ENCODE measurements at regions of chr4 and their contacts with region 1.

Region 1: DNA sequence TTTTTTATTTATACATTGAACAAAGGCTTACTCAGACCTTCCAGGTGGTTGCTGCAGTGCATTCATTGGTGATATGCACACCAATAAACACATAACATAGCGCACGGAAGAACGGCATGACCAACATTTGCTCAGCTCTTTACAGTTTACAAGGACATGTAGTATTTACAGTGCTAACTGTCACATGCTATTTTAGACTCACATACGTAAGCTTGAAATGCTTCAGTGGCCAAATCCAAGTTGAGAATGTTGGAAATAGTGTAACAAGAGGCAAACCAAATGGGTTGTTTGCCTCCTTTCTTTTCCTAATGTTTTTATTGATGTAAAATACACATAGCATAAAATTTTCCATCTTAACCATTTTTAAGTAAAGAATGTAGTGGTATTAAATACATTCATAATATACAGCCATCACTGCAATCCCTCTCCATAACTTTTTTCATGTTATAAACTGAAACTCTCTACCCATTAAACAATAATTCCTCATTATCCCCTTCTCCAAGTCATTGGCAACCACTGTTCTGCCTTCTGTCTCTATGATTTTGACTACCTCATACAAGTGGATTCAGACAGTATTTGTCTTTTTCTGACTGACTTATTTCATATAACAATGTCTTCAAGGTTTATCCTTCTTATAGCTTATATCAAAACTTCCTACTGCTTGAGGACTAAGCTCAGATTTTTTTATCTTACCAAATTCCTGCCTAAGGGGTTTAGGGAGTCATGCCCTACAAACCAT is 1722.9 kb upstream of the AGA start:
- DNase-seq: no peak
- ATAC-seq: peak; percentile 37
- H3K4me3 Mint-ChIP-seq: peak overlapping the region; percentile 98
- H3K27ac Mint-ChIP-seq: peak overlapping the region; percentile 99
- H3K4me1 Mint-ChIP-seq: peaks cover 31% of the 10 kb centered on the region
- H3K27me3 Mint-ChIP-seq: no peaks in the 10 kb centered on the region
- CTCF ChIP-seq: no peak

Region 2: DNA sequence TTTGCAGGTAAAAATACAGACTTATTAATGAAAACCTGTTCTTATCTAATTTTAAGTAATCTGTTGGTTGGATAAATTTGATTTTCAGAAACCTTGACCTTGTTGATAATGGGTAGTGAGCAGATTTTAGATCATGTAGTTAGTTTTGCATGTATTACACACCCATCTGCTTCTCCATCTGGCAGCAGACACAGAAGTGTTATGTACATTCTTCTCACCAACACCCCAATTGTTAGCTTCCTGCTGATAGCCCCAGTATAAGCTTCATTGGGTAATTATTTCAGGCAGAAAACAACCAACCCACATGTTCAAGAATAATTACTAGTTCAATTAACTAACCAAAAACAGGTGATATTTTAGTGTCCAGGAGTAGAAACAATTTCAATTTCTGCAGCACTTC is 17.6 kb after region 1 on chr4:
- CTCF ChIA-PET with region 1: no interaction called
- POLR2A ChIA-PET with region 1: no interaction called
- DNase-seq: no peak
- ATAC-seq: no peak
- H3K4me3 Mint-ChIP-seq: no peak overlapping the region
- H3K27ac Mint-ChIP-seq: no peak overlapping the region
- H3K4me1 Mint-ChIP-seq: peaks cover 33% of the 10 kb centered on the region
- H3K27me3 Mint-ChIP-seq: no peaks in the 10 kb centered on the region
- CTCF ChIP-seq: no peak

Region 3: DNA sequence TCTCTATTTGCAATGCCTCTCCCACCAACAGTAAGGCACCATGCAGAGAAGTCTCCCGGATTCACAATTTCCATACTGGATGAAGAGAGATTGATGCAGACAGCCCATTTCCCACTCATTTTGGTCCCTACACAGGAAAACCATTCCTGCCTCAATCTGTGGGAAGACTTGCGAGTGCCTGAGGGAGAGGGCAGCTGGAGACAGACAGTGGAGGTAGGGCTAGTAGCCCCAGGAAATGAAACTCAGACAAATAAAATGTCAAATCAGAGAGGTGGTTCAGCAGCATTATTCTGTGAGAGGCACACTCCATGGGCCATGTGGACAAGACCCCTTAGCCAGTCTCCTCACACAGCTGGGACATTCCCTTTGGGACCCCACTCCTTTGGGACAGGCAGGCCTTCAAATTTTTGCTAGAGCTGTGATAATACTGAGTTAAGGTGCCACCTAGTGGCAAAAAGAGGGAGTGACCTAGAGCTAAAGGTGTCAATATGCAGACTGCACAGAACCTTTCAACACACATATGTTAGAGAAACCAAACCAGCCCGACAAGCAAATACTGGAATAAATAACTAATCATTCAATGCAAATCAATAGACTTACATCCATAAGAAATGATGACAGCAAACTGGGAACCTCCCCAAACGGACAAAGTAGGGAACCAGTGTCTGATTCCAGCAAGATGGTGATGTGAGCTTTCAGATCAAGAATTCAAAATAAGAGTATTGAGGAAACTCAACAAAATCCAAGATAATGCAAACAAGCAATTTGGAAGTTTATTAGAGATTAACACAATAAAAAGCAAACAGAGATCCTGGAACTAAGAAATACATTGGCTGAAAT is 142.3 kb after region 1 on chr4:
- CTCF ChIA-PET with region 1: interaction called, 17 read pairs
- POLR2A ChIA-PET with region 1: no interaction called
- DNase-seq: peak; percentile 52
- ATAC-seq: peak; percentile 98
- H3K4me3 Mint-ChIP-seq: no peak overlapping the region
- H3K27ac Mint-ChIP-seq: no peak overlapping the region
- H3K4me1 Mint-ChIP-seq: peaks cover 14% of the 10 kb centered on the region
- H3K27me3 Mint-ChIP-seq: no peaks in the 10 kb centered on the region
- CTCF ChIP-seq: peak; percentile 87

Measured in WTC11 (cell line).